ENCODE measurements at regions of chr17 and their contacts with region 1.

Region 1: DNA sequence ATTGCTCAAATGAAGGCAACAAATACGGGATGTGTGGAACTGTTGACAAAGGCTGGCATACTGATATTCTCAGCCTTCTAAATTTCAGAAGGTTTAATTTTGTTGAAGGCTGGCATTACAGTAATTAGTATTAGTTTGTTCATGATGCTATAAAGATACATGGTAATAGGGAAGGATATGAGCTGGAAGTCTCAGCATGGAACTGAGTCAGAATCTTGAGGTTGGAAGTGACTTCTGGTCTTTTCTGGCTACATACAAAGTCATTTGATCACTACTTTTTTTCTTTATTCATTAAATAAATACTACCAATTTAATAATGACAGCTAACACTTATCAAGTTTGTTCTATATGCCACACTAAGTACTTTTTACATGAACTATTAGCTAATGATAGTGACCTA is 22.6 kb downstream of the RABEP1 start:
- DNase-seq: no peak
- ATAC-seq: no peak
- H3K4me3 ChIP-seq: no peak overlapping the region
- H3K27ac ChIP-seq: no peak overlapping the region
- H3K4me1 ChIP-seq: no peaks in the 10 kb centered on the region
- H3K27me3 ChIP-seq: no peaks in the 10 kb centered on the region
- CTCF ChIP-seq: no peak
- EP300 ChIP-seq: no peak
- POLR2A ChIP-seq: no peak
- RAD21 ChIP-seq: no peak

Region 2: GRCh38 chr17:5210614-5211252 is 93.9 kb before region 1 on chr17:
- CTCF ChIA-PET with region 1: no interaction called
- POLR2A ChIA-PET with region 1: no interaction called
- in situ Hi-C with region 1: no loop called
- intact Hi-C with region 1: no loop called
- DNase-seq: no peak
- ATAC-seq: no peak
- H3K4me3 ChIP-seq: no peak overlapping the region
- H3K27ac ChIP-seq: no peak overlapping the region
- H3K4me1 ChIP-seq: no peaks in the 10 kb centered on the region
- H3K27me3 ChIP-seq: no peaks in the 10 kb centered on the region
- CTCF ChIP-seq: no peak
- EP300 ChIP-seq: no peak
- POLR2A ChIP-seq: no peak
- RAD21 ChIP-seq: no peak

Region 3: GRCh38 chr17:5249615-5250014 is 55.0 kb before region 1 on chr17:
- CTCF ChIA-PET with region 1: interaction called, 6 read pairs
- POLR2A ChIA-PET with region 1: no interaction called
- in situ Hi-C with region 1: no loop called
- intact Hi-C with region 1: loop called (anchors 1 kb)
- DNase-seq: peak; percentile 71
- ATAC-seq: peak; percentile 76
- H3K4me3 ChIP-seq: no peak overlapping the region
- H3K27ac ChIP-seq: no peak overlapping the region
- H3K4me1 ChIP-seq: peaks cover 25% of the 10 kb centered on the region
- H3K27me3 ChIP-seq: peaks cover 2 to 4% of the 10 kb centered on the region in 2 experiments; a peak in 2 of 5 replicates
- CTCF ChIP-seq: peak; percentile 82
- EP300 ChIP-seq: no peak
- POLR2A ChIP-seq: no peak
- RAD21 ChIP-seq: peak; percentile 43; the same call in 1 of the 2 replicates

Region 4: GRCh38 chr17:5584383-5585286 is 280.0 kb after region 1 on chr17 and contains the start of gene NLRP1:
- CTCF ChIA-PET with region 1: no interaction called
- POLR2A ChIA-PET with region 1: no interaction called
- in situ Hi-C with region 1: no loop called
- intact Hi-C with region 1: no loop called
- DNase-seq: peak; percentile 20
- ATAC-seq: peak; percentile 45
- H3K4me3 ChIP-seq: no peak within 1 kb of the TSS
- H3K27ac ChIP-seq: no peak within 1 kb of the TSS
- H3K4me1 ChIP-seq: no peaks in the 10 kb centered on the region
- H3K27me3 ChIP-seq: no peaks in the 10 kb centered on the region
- CTCF ChIP-seq: no peak
- EP300 ChIP-seq: no peak
- POLR2A ChIP-seq: no peak
- RAD21 ChIP-seq: no peak
- total RNA-seq, gene NLRP1: 3.3 and 3.4 TPM in 2 replicates